CD4-positive, alpha-beta memory T cell (primary cell): ENCODE measurements at regions of chr3 and their contacts with region 1.

Region 1: DNA sequence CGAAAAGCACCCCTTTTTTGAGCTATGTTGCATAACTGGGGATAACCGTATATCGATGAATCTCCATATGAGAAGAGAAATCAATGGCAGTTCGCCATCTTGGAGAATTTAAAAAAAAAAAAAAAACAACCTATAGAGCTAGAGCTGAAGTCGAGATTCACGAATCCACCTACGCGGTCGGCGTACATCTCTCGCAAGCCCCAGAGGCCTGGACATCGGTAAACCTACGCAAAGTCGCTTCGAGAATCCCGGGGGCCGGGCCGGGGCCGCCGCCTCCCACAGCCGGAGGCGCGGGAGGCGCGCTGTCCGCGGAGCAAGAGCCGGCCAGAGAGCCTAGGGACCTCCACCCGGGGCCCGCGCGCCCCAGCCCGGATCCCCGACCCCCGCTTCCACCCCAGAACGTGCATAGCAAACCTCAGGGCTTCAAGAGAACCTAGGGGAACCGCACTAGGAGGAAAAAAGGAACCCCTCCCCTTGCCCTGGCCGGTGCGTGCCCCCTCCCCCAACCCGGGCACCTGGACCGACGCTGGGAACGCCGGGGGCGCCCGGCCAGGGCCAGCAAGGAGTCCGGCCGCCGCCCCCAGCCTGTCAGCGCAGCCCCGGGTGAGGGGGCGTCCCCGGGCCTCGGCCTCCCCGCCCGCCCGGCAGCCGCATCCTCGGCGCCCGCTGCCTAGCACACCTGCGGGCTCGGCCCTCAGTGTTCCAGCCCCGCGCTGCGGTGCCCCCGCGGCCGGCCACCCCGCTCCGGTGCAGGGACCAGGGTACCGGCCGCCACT is 567 bp downstream of the PFN2 start:
- DNase-seq: peak; percentile 72 to 80 (median 77)
- H3K4me3 ChIP-seq: peak overlapping the region; percentile 8 to 44
- H3K4me3 Mint-ChIP-seq: peak overlapping the region; percentile 89 to 96 (median 90)
- H3K27ac ChIP-seq: peak overlapping the region; percentile 27
- H3K27ac Mint-ChIP-seq: peak overlapping the region; percentile 73 to 91 (median 87)
- H3K4me1 ChIP-seq: peaks cover 12% of the 10 kb centered on the region
- H3K4me1 Mint-ChIP-seq: peaks cover 14 to 20% (median 19%) of the 10 kb centered on the region in 4 donors
- H3K27me3 ChIP-seq: peaks cover 7% of the 10 kb centered on the region
- H3K27me3 Mint-ChIP-seq: peaks cover 7 to 15% of the 10 kb centered on the region in 2 donors

Region 2: DNA sequence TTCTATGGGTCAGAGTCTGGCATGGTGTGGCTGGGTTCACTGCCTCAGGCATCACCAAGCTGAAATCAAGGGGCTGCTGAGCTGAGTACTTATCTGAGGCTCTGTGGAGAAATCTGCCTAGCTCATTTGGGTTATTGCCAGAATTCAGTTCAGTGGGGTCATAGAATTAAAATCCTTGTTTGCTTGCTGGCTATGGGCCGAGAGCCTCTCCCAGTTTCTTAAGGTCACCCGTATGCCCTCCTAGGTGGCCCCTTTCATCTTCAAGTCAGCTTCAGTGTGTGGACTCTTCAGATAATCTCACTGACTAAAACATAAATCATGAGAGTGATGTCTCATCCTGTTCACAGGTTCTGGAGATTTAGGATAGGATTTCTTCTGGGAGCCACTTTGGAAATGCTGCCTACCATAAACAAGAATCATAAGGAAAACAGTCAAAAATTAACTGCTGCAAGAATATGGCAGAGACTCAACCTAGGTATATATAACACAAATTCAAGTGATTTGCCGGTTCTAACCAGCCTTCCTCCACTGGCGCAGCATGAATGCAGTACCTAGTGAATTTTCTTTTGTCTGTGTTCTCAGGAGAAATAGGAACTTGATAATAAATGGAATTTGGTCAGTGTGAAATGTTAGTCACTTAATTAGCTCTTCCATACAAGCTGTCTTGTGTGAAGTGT is 753.8 kb before region 1 on chr3:
- CTCF ChIA-PET with region 1: no interaction called
- POLR2A ChIA-PET with region 1: no interaction called
- intact Hi-C with region 1: no loop called
- DNase-seq: no peak
- H3K4me3 ChIP-seq: no peak overlapping the region
- H3K4me3 Mint-ChIP-seq: no peak overlapping the region
- H3K27ac ChIP-seq: no peak overlapping the region
- H3K27ac Mint-ChIP-seq: no peak overlapping the region
- H3K4me1 ChIP-seq: no peaks in the 10 kb centered on the region
- H3K4me1 Mint-ChIP-seq: no peaks in the 10 kb centered on the region
- H3K27me3 ChIP-seq: no peaks in the 10 kb centered on the region
- H3K27me3 Mint-ChIP-seq: peaks cover 0 to 3% of the 10 kb centered on the region in 2 donors

Region 3: GRCh38 chr3:149736175-149736952 is 233.8 kb before region 1 on chr3:
- CTCF ChIA-PET with region 1: no interaction called
- POLR2A ChIA-PET with region 1: no interaction called
- intact Hi-C with region 1: no loop called
- DNase-seq: no peak
- H3K4me3 ChIP-seq: no peak overlapping the region
- H3K4me3 Mint-ChIP-seq: no peak overlapping the region
- H3K27ac ChIP-seq: no peak overlapping the region
- H3K27ac Mint-ChIP-seq: no peak overlapping the region
- H3K4me1 ChIP-seq: no peaks in the 10 kb centered on the region
- H3K4me1 Mint-ChIP-seq: peaks cover 0 to 1% (median under 1%) of the 10 kb centered on the region in 4 donors
- H3K27me3 ChIP-seq: no peaks in the 10 kb centered on the region
- H3K27me3 Mint-ChIP-seq: no peaks in the 10 kb centered on the region

Region 4: DNA sequence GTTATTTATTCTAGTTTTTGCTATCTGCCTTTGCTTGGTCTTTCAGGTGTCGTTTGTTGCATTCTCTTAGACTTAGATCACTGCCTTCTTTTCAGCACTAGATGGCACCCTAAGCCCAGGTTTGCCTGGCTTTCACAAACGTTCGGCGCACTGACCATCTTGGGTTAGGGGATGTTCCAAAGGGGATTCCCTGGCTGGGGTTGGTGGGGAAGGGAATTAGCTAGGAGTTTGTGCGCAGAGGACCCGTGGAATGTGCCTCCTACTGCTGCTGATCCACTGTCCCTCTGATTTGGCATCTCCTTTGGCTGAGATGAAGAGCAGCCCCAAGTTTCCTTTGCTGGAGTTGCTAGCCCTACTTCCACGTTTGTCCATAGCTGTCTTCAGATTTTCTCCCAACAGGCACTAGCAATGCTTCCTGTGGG is 33.3 kb before region 1 on chr3:
- CTCF ChIA-PET with region 1: interaction called, 11 read pairs
- POLR2A ChIA-PET with region 1: no interaction called
- intact Hi-C with region 1: no loop called
- DNase-seq: peak; percentile 31 to 46 (median 39)
- H3K4me3 ChIP-seq: no peak overlapping the region
- H3K4me3 Mint-ChIP-seq: peak overlapping the region in 2 of 8 donors; percentile 23 to 47
- H3K27ac ChIP-seq: no peak overlapping the region
- H3K27ac Mint-ChIP-seq: peak overlapping the region in 1 of 7 donors; percentile 83
- H3K4me1 ChIP-seq: peaks cover 4% of the 10 kb centered on the region
- H3K4me1 Mint-ChIP-seq: peaks cover 11 to 22% (median 20%) of the 10 kb centered on the region in 4 donors
- H3K27me3 ChIP-seq: no peaks in the 10 kb centered on the region
- H3K27me3 Mint-ChIP-seq: no peaks in the 10 kb centered on the region

Region 5: DNA sequence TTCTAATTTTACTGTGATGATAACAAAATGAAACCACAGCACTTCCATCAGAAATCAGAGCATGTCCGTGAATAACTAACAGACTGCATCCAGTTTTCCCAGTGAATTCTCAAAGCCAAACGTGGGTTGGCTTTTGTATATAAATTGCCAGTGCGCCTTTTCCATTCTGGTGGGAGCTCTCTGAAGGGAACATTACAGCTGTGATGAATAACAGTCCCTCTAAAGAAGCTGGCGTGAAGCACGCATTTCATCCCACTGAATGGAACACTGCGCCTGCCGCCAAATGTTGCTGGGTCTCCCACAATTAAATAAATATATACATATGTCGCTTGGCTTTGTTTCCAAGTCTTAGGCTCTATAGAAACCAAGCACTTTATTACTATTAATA is 113.5 kb after region 1 on chr3:
- CTCF ChIA-PET with region 1: no interaction called
- POLR2A ChIA-PET with region 1: no interaction called
- intact Hi-C with region 1: no loop called
- DNase-seq: no peak
- H3K4me3 ChIP-seq: no peak overlapping the region
- H3K4me3 Mint-ChIP-seq: no peak overlapping the region
- H3K27ac ChIP-seq: no peak overlapping the region
- H3K27ac Mint-ChIP-seq: no peak overlapping the region
- H3K4me1 ChIP-seq: no peaks in the 10 kb centered on the region
- H3K4me1 Mint-ChIP-seq: no peaks in the 10 kb centered on the region
- H3K27me3 ChIP-seq: no peaks in the 10 kb centered on the region
- H3K27me3 Mint-ChIP-seq: peaks cover 5 to 7% of the 10 kb centered on the region in 2 donors

Region 6: GRCh38 chr3:150183678-150184425 is 213.7 kb after region 1 on chr3:
- CTCF ChIA-PET with region 1: interaction called, 63 read pairs
- POLR2A ChIA-PET with region 1: interaction called, 6 read pairs
- intact Hi-C with region 1: loop called (anchors 1 kb)
- DNase-seq: peak in 4 of 5 donors; percentile 32 to 48 (median 39)
- H3K4me3 ChIP-seq: no peak overlapping the region
- H3K4me3 Mint-ChIP-seq: no peak overlapping the region
- H3K27ac ChIP-seq: no peak overlapping the region
- H3K27ac Mint-ChIP-seq: no peak overlapping the region
- H3K4me1 ChIP-seq: peaks cover 4% of the 10 kb centered on the region
- H3K4me1 Mint-ChIP-seq: no peaks in the 10 kb centered on the region
- H3K27me3 ChIP-seq: no peaks in the 10 kb centered on the region
- H3K27me3 Mint-ChIP-seq: peaks cover 0 to 7% of the 10 kb centered on the region in 2 donors

Region 7: DNA sequence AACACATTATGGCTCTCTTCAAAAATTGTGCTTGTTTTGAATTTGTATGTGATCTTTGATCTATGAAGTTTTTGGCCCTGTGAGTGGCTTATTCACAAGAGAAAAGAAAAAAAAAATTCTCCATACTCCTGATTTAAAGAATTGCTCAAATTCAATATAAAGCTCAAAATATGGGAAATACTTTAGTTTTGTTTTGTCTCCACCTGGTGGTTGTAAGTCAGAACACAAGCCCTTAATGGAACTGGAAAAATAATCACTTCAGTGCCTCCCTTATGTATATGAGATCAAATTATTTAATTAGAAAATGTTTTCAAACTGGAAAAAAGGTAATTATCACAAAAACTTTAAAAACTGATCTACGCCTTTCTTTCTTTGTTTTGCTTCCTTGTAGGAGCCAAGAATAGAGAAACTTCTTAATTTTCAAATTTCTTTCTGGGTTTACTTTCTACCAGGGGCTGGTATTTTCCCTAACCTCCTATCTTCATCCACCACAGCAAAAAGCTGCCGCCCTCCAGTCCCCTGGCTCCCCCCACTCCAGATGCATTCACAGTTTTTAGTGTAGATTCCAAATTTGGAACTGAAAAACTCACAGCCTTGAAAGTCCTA is 525.5 kb after region 1 on chr3:
- CTCF ChIA-PET with region 1: no interaction called
- POLR2A ChIA-PET with region 1: no interaction called
- intact Hi-C with region 1: loop called (anchors 1 kb)
- DNase-seq: peak in 4 of 5 donors; percentile 36 to 46 (median 44)
- H3K4me3 ChIP-seq: no peak overlapping the region
- H3K4me3 Mint-ChIP-seq: no peak overlapping the region
- H3K27ac ChIP-seq: no peak overlapping the region
- H3K27ac Mint-ChIP-seq: no peak overlapping the region
- H3K4me1 ChIP-seq: no peaks in the 10 kb centered on the region
- H3K4me1 Mint-ChIP-seq: no peaks in the 10 kb centered on the region
- H3K27me3 ChIP-seq: no peaks in the 10 kb centered on the region
- H3K27me3 Mint-ChIP-seq: peaks cover 0 to 1% of the 10 kb centered on the region in 2 donors

Region 8: DNA sequence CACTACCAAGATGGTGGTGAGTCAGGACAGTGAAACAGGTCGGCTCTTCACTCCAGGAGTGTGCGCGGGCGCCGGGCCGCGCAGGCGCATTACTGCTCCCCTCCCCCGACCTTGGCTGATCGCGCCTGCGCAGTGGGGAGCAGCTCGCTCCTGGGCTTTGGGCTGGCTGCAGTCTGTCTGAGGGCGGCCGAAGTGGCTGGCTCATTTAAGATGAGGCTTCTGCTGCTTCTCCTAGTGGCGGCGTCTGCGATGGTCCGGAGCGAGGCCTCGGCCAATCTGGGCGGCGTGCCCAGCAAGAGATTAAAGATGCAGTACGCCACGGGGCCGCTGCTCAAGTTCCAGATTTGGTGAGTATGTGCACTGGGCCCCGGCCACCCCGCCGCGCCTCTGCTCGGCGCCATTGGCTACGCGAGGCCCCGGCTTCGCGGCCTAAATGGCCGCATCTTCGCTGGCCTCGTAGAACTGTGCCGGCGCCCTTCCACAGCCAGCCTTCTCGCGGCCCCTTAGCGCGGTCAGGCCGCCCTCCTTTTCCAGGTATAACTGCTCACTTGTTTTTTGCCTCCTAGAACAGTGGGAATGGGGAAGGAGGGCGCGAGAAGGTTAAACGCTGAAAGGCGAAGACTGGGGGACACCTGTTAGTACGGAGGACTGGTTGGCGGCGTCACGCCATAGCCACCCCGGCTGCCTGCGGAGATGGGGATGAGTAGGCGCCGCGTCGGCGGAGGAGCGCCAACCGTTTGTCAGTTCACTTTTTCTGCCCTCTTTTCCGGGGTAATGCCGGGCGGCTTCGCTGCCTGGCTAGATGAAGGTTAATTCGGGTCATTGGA is 633.2 kb after region 1 on chr3 and contains the start of gene SELENOT:
- CTCF ChIA-PET with region 1: no interaction called
- POLR2A ChIA-PET with region 1: no interaction called
- intact Hi-C with region 1: loop called (anchors 10 kb)
- DNase-seq: peak; percentile 92 to 98 (median 96)
- H3K4me3 ChIP-seq: peak within 1 kb of the TSS; percentile 71 to 91
- H3K4me3 Mint-ChIP-seq: peak within 1 kb of the TSS; percentile 92 to 98 (median 96)
- H3K27ac ChIP-seq: peak within 1 kb of the TSS; percentile 97
- H3K27ac Mint-ChIP-seq: peak within 1 kb of the TSS; percentile 97 to 99 (median 98)
- H3K4me1 ChIP-seq: peaks cover 53% of the 10 kb centered on the region
- H3K4me1 Mint-ChIP-seq: peaks cover 37 to 78% (median 61%) of the 10 kb centered on the region in 4 donors
- H3K27me3 ChIP-seq: no peaks in the 10 kb centered on the region
- H3K27me3 Mint-ChIP-seq: no peaks in the 10 kb centered on the region
- total RNA-seq, gene SELENOT: 71.8 to 87.1 TPM